Right ventricle myocardium inferior (tissue), 1 donor: ENCODE measurements at regions of chr5 and their contacts with region 1.

Region 1: GRCh38 chr5:139120521-139120920 is 77.6 kb downstream of the SIL1 start:
- DNase-seq: no peak
- ATAC-seq: peak; percentile 82

Region 2: GRCh38 chr5:139038613-139039305 is 81.8 kb before region 1 on chr5:
- intact Hi-C with region 1: no loop called
- DNase-seq: no peak
- ATAC-seq: peak; percentile 28

Region 3: DNA sequence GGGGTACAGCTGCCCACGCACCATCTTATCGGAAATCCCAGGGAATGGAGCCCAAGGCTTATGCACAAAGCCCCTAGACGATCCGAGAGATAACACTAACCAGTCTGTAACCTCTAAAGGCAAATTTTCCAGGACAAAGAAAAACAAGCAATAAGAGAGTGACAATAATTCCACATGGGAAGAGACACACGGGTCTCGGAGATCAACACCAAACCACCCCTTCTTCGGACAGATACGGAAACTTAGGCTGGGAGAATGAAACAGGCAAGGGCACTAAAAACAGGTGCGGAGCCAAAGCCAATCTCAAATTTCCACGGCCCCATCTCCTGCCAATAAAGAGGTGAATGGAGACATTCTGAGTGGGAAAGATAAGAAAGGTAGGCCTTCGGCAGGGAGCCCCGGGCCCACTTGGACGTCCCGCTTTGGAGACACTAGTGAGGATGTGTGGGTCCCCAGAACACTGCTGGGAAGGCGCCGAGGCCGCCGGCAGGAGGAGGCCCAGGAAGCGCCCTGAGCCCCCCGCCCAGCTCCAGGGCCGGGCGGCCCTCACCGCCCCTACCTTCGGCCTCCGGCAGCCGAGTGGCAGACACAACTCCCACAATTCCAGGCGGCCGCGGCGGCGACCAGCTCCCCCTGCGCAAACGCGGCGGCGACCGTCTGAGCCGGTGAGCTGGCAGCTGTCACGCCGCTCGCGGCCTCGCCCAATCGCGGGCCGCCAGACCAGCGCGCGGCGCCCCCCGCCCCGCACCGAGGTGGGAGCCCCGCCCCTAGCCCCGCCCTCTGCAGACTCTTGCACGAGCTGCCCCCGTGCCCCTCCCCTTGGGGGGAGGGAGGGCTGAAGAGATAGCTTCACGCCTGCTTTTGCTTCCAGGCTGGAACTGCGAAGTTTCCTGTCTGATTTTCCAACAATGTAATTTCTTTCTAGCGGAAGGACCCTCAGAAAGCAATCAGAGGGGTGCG is 77.5 kb after region 1 on chr5 and contains the start of gene SIL1:
- intact Hi-C with region 1: loop called (anchors 5 kb)
- DNase-seq: peak; percentile 99
- ATAC-seq: peak; percentile 99
- total RNA-seq, gene SIL1: 46.2 TPM

Region 4: DNA sequence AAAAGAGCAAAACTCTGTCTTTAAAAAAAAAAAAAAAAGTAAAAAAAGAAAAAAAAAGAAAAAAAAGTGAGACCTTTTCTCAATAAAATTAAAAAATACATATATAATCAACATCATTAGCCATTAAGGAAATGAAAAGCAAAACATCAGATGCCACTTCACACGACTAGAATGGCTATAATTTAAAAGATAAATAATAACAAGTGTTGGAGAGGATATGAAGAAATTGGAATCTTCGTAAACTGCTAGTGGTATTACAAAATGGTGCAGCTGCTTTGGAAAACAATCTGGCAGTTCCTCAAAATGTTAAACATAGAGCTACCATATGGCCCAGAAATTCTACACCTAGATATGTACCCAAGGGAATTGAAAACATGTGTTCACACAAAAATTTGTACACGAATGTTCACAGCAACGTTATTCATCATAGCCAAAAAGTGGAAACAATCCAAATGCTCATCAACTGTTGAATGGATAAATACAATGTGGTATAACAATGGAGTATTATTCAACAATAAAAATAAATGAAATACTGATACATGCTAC is 123.0 kb after region 1 on chr5:
- intact Hi-C with region 1: no loop called
- DNase-seq: no peak
- ATAC-seq: no peak